ENCODE measurements at regions of chr2 and their contacts with region 1.

Region 1: GRCh38 chr2:70301344-70302194 is at the start of gene FAM136A:
- DNase-seq: peak; percentile 89
- ATAC-seq: peak; percentile 88
- H3K4me3 Mint-ChIP-seq: peak within 1 kb of the TSS; percentile 93
- H3K27ac Mint-ChIP-seq: peak within 1 kb of the TSS; percentile 97
- H3K4me1 Mint-ChIP-seq: peaks cover 34% of the 10 kb centered on the region
- H3K27me3 Mint-ChIP-seq: no peaks in the 10 kb centered on the region
- CTCF ChIP-seq: peak; percentile 90
- total RNA-seq, gene FAM136A: 63.0 to 68.9 TPM

Region 2: DNA sequence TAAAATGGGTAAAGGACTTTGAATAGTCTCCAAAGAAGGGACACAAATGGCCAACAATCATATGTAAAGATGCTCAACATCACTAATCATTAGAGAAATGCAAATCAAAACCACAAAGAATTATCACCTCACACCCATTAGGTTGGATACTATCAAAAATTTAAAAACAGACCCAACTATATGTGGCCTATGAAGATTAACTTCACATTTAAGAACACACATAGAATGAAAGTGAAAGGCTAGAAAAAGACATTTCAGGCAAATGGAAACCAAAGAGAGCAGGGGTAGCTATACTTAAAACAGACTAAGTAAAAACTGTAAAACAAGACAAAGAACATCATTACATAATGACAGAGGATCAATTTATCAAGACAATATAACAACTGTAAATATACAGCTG is 286.6 kb before region 1 on chr2:
- CTCF ChIA-PET with region 1: no interaction called
- POLR2A ChIA-PET with region 1: no interaction called
- intact Hi-C with region 1: no loop called
- DNase-seq: no peak
- ATAC-seq: no peak
- H3K4me3 Mint-ChIP-seq: no peak overlapping the region
- H3K27ac Mint-ChIP-seq: no peak overlapping the region
- H3K4me1 Mint-ChIP-seq: peaks cover 23% of the 10 kb centered on the region
- H3K27me3 Mint-ChIP-seq: no peaks in the 10 kb centered on the region
- CTCF ChIP-seq: no peak

Region 3: GRCh38 chr2:70115646-70116442 is 185.7 kb before region 1 on chr2:
- CTCF ChIA-PET with region 1: no interaction called
- POLR2A ChIA-PET with region 1: no interaction called
- intact Hi-C with region 1: no loop called
- DNase-seq: peak; percentile 46
- ATAC-seq: peak; percentile 57
- H3K4me3 Mint-ChIP-seq: peak overlapping the region; percentile 7
- H3K27ac Mint-ChIP-seq: peak overlapping the region; percentile 61
- H3K4me1 Mint-ChIP-seq: peaks cover 54% of the 10 kb centered on the region
- H3K27me3 Mint-ChIP-seq: no peaks in the 10 kb centered on the region
- CTCF ChIP-seq: no peak

Region 4: GRCh38 chr2:70190418-70191243 is 110.9 kb before region 1 on chr2 and contains the start of gene C2orf42:
- CTCF ChIA-PET with region 1: interaction called, 5 read pairs
- POLR2A ChIA-PET with region 1: interaction called, 11 read pairs
- intact Hi-C with region 1: no loop called
- DNase-seq: peak; percentile 98
- ATAC-seq: peak; percentile 85
- H3K4me3 Mint-ChIP-seq: peak within 1 kb of the TSS; percentile 87
- H3K27ac Mint-ChIP-seq: peak within 1 kb of the TSS; percentile 99
- H3K4me1 Mint-ChIP-seq: peaks cover 19% of the 10 kb centered on the region
- H3K27me3 Mint-ChIP-seq: no peaks in the 10 kb centered on the region
- CTCF ChIP-seq: no peak
- total RNA-seq, gene C2orf42: 19.2 to 24.6 TPM

Region 5: GRCh38 chr2:70321370-70321769 is 19.8 kb after region 1 on chr2:
- CTCF ChIA-PET with region 1: interaction called, 40 read pairs
- POLR2A ChIA-PET with region 1: no interaction called
- intact Hi-C with region 1: no loop called
- DNase-seq: no peak
- ATAC-seq: no peak
- H3K4me3 Mint-ChIP-seq: no peak overlapping the region
- H3K27ac Mint-ChIP-seq: no peak overlapping the region
- H3K4me1 Mint-ChIP-seq: peaks cover 9% of the 10 kb centered on the region
- H3K27me3 Mint-ChIP-seq: peaks cover 4% of the 10 kb centered on the region
- CTCF ChIP-seq: no peak

Region 6: GRCh38 chr2:70385966-70386595 is 84.5 kb after region 1 on chr2:
- CTCF ChIA-PET with region 1: no interaction called
- POLR2A ChIA-PET with region 1: no interaction called
- intact Hi-C with region 1: no loop called
- DNase-seq: no peak
- ATAC-seq: no peak
- H3K4me3 Mint-ChIP-seq: no peak overlapping the region
- H3K27ac Mint-ChIP-seq: no peak overlapping the region
- H3K4me1 Mint-ChIP-seq: no peaks in the 10 kb centered on the region
- H3K27me3 Mint-ChIP-seq: peaks cover 1% of the 10 kb centered on the region
- CTCF ChIP-seq: no peak

Region 7: GRCh38 chr2:70616168-70616694 is 314.7 kb after region 1 on chr2:
- CTCF ChIA-PET with region 1: interaction called, 96 read pairs
- POLR2A ChIA-PET with region 1: no interaction called
- intact Hi-C with region 1: loop called (anchors 10 kb)
- DNase-seq: no peak
- ATAC-seq: no peak
- H3K4me3 Mint-ChIP-seq: no peak overlapping the region
- H3K27ac Mint-ChIP-seq: no peak overlapping the region
- H3K4me1 Mint-ChIP-seq: no peaks in the 10 kb centered on the region
- H3K27me3 Mint-ChIP-seq: peaks cover 3% of the 10 kb centered on the region
- CTCF ChIP-seq: no peak

Region 8: DNA sequence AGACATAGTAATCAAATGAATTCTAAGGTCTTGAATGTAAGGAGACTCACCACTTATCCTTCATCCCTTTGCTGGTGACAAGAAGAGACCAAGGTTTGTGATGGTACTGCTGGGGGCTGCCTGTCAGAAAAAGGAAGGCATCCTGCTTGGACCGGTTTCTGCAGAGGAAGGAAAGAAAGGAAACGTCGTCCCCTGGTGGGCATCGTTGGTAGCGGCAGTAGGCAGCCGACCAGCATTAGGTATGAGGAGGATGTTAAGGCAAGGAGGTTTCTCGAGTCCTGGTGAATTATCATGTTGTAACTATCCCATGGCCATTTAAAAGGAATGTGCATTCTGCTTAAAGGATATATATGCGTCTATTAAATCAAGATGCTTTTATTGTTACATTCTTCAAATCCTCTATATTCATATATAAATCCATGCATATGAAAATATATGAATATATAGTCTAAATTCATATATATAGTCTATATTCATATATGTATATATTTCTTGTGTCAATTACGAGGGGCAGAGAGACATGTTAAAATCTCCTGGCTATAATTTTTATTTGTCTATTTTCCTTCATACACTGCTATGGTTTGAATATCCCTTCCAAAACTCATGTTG is 346.4 kb after region 1 on chr2:
- CTCF ChIA-PET with region 1: interaction called, 98 read pairs
- POLR2A ChIA-PET with region 1: no interaction called
- intact Hi-C with region 1: loop called (anchors 5 kb)
- DNase-seq: peak; percentile 88
- ATAC-seq: peak; percentile 92
- H3K4me3 Mint-ChIP-seq: no peak overlapping the region
- H3K27ac Mint-ChIP-seq: no peak overlapping the region
- H3K4me1 Mint-ChIP-seq: no peaks in the 10 kb centered on the region
- H3K27me3 Mint-ChIP-seq: peaks cover 6% of the 10 kb centered on the region
- CTCF ChIP-seq: peak; percentile 96

Measured in activated CD8-positive, alpha-beta T cell treated with anti-CD3 and anti-CD28 coated beads for 36 hours (primary cell).